ENCODE measurements at regions of chr14 and their contacts with region 1.

Region 1: GRCh38 chr14:77376771-77377501 is at the starts of genes SAMD15 and TMED8:
- DNase-seq: peak; percentile 72 to 83
- H3K4me3 ChIP-seq: peak within 1 kb of the TSS; percentile 71 to 89
- H3K27ac ChIP-seq: peak within 1 kb of the TSS; percentile 80 to 87
- H3K4me1 ChIP-seq: peaks cover 0 to 15% (median 12%) of the 10 kb centered on the region in 4 donors
- H3K27me3 ChIP-seq: no peaks in the 10 kb centered on the region
- CTCF ChIP-seq: peak; percentile 32 to 42

Region 2: DNA sequence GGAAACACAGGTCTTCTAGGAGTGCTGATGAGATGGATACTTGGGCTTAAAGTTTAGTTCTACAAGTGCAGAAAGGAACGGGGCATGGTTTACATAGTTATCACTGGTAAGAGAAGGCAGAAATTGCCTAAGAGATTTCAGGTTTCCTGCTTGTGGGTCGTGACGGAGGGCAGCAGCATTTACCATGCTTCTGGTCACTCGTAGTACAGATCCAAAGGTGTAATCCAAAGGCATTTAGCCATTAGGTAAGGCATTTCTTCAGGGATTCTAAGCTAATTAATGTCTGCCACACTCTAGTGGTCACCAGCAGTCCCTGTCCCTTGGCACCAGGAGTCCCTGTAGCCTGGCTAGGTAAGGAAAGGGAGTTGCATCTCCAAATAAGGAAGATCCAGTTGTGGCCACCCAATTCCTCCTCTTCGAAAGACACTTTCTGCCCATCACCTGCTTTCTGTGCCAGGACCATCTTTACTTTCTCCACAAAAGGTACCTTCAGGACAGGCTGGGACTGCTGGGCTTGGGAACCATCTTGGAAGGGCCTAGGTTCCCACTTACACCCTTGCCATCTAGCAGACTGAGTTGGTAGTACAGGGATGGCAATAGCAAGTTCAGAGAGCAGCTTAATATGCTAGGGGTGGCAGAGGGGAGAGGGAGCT is 54.6 kb before region 1 on chr14:
- intact Hi-C with region 1: loop called (anchors 2 kb)
- DNase-seq: peak in 1 of 2 donors; percentile 45
- H3K4me3 ChIP-seq: peak overlapping the region; percentile 90 to 95
- H3K27ac ChIP-seq: peak overlapping the region; percentile 94 to 97
- H3K4me1 ChIP-seq: peaks cover 0 to 18% (median 14%) of the 10 kb centered on the region in 4 donors
- H3K27me3 ChIP-seq: no peaks in the 10 kb centered on the region
- CTCF ChIP-seq: no peak

Region 3: GRCh38 chr14:77442196-77442595 is 65.3 kb after region 1 on chr14:
- intact Hi-C with region 1: no loop called
- DNase-seq: no peak
- H3K4me3 ChIP-seq: no peak overlapping the region
- H3K27ac ChIP-seq: no peak overlapping the region
- H3K4me1 ChIP-seq: no peaks in the 10 kb centered on the region
- H3K27me3 ChIP-seq: no peaks in the 10 kb centered on the region
- CTCF ChIP-seq: no peak